CD8-positive, alpha-beta T cell (primary cell): ENCODE measurements at regions of chr7 and their contacts with region 1.

Region 1: DNA sequence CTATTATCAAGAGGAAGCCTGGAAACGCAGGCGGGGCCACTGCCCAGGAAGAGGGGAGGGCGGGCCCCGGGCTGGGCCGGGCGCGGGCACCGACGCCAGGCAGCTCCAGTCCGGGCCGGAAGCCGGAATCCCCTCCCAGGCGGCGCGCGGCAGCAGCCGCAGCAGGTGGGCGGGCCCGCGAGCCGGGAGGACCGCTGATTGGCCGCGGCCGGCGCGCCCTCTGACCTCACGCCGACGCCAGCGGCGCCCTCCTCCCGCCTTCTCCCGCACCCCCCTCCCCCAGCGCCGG is 438 bp downstream of the BCL7B start:
- DNase-seq: peak; percentile 79 to 96 (median 90)
- ATAC-seq: peak; percentile 91
- H3K4me3 ChIP-seq: peak overlapping the region; percentile 83 to 84
- H3K4me3 Mint-ChIP-seq: peak overlapping the region; percentile 95
- H3K27ac ChIP-seq: peak overlapping the region; percentile 98 to 99
- H3K27ac Mint-ChIP-seq: peak overlapping the region; percentile 99
- H3K4me1 ChIP-seq: peaks cover 23% of the 10 kb centered on the region
- H3K4me1 Mint-ChIP-seq: peaks cover 36% of the 10 kb centered on the region
- H3K27me3 ChIP-seq: no peaks in the 10 kb centered on the region
- H3K27me3 Mint-ChIP-seq: no peaks in the 10 kb centered on the region
- CTCF ChIP-seq: no peak

Region 2: DNA sequence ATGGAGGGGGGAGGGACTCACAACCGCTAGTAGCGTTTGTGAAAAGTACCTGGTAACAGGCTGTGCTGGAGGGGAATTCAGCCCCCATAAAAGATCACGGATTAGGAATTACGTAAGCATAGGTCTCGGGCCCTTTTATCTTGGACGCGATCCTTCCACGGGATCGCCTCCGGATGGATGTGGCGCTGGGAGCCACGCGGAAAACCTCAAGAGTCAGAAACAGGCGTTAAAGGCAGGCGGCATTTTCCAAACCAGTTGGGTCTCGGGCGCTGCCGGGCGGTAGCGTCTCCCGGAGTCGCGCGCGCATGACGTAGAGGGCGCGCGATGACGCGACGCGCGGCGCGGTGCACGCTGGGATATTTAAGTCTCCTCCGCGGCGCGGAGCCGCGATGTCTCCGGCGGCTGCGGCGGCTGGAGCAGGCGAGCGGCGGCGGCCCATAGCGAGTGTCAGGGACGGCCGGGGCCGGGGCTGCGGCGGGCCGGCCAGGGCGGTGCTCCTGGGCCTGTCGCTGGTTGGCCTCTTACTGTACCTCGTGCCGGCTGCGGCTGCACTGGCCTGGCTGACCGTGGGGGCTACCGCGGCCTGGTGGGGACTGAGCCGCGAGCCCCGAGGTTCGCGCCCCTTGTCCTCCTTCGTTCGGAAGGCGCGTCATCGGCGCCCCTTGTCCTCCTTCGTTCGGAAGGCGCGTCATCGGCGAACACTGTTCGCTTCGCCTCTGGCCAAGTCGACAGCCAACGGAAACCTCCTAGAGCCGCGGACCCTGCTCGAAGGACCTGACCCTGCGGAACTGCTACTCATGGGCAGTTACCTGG is 632.1 kb before region 1 on chr7 and contains the start of gene POM121:
- CTCF ChIA-PET with region 1: no interaction called
- POLR2A ChIA-PET with region 1: no interaction called
- intact Hi-C with region 1: loop called in 1 of 2 experiments (anchors 1 kb)
- DNase-seq: peak; percentile 65 to 94 (median 82)
- ATAC-seq: peak; percentile 92
- H3K4me3 ChIP-seq: peak within 1 kb of the TSS; percentile 78 to 88
- H3K4me3 Mint-ChIP-seq: peak within 1 kb of the TSS; percentile 99
- H3K27ac ChIP-seq: peak within 1 kb of the TSS; percentile 92 to 94
- H3K27ac Mint-ChIP-seq: peak within 1 kb of the TSS; percentile 100
- H3K4me1 ChIP-seq: peaks cover 19% of the 10 kb centered on the region
- H3K4me1 Mint-ChIP-seq: peaks cover 41% of the 10 kb centered on the region
- H3K27me3 ChIP-seq: no peaks in the 10 kb centered on the region
- H3K27me3 Mint-ChIP-seq: no peaks in the 10 kb centered on the region
- CTCF ChIP-seq: no peak
- total RNA-seq, gene POM121: 79.4 to 83.6 TPM

Region 3: DNA sequence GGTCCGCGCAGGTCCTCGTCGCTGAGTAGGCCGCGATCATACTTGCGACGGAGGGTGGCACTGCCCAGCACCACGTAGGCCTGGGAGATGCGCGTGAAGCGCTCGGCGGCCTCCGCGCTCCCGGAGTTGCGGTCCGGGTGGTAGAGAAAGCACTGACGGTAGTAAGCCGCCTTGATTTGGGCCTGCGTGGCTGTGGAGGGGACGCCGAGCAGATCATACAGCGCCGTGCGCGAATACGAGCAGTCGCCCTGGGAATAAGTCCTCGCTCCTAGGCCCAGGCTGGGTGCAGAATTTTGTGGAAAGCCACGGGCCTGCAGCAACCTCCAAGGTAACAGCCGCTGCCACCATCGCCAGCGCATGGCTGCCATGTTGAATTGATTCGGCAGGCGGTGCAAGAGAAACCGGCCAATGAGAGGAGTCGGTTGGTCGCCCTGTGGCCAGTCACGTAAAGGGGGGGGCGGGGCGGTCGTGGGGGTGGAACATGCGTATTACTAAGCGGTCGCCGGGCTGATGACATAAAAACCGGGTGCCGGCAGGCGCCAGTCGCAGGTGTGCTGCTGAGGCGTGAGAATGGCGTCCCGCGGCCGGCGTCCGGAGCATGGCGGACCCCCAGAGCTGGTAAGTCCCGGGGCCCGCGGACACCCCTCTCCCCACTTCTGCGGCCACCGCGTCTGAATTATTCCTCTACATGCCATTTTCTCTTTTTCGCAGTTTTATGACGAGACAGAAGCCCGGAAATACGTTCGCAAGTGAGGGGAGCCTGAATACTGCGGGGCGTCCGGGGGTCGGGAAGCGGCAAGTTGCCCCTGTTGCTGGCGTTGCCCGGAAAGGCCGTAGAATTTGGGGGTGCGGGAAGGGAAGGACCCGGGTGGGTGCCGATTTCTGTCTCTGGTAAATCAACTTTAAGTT is 126.3 kb after region 1 on chr7 and contains the starts of genes BUD23 and DNAJC30:
- CTCF ChIA-PET with region 1: no interaction called
- POLR2A ChIA-PET with region 1: no interaction called
- intact Hi-C with region 1: loop called (anchors 1 to 5 kb)
- DNase-seq: peak; percentile 95 to 97 (median 97)
- ATAC-seq: peak; percentile 98
- H3K4me3 ChIP-seq: peak within 1 kb of the TSS; percentile 80 to 96
- H3K4me3 Mint-ChIP-seq: peak within 1 kb of the TSS; percentile 93
- H3K27ac ChIP-seq: peak within 1 kb of the TSS; percentile 81 to 90
- H3K27ac Mint-ChIP-seq: peak within 1 kb of the TSS; percentile 97
- H3K4me1 ChIP-seq: peaks cover 29% of the 10 kb centered on the region
- H3K4me1 Mint-ChIP-seq: peaks cover 39% of the 10 kb centered on the region
- H3K27me3 ChIP-seq: no peaks in the 10 kb centered on the region
- H3K27me3 Mint-ChIP-seq: no peaks in the 10 kb centered on the region
- CTCF ChIP-seq: no peak
- total RNA-seq, gene BUD23: 123 to 129 TPM
- total RNA-seq, gene DNAJC30: 13.5 to 14.4 TPM

Region 4: GRCh38 chr7:73718905-73719805 is 162.1 kb after region 1 on chr7 and contains the start of gene STX1A:
- CTCF ChIA-PET with region 1: no interaction called
- POLR2A ChIA-PET with region 1: no interaction called
- intact Hi-C with region 1: loop called in 1 of 2 experiments (anchors 2 kb)
- DNase-seq: peak; percentile 28 to 86 (median 69)
- ATAC-seq: peak; percentile 76
- H3K4me3 ChIP-seq: peak within 1 kb of the TSS; percentile 73 to 79
- H3K4me3 Mint-ChIP-seq: peak within 1 kb of the TSS; percentile 87
- H3K27ac ChIP-seq: no peak within 1 kb of the TSS
- H3K27ac Mint-ChIP-seq: no peak within 1 kb of the TSS
- H3K4me1 ChIP-seq: peaks cover 28% of the 10 kb centered on the region
- H3K4me1 Mint-ChIP-seq: peaks cover 22% of the 10 kb centered on the region
- H3K27me3 ChIP-seq: no peaks in the 10 kb centered on the region
- H3K27me3 Mint-ChIP-seq: no peaks in the 10 kb centered on the region
- CTCF ChIP-seq: no peak
- total RNA-seq, gene STX1A: 18.2 to 20.8 TPM

Region 5: GRCh38 chr7:73839757-73840714 is 283.0 kb after region 1 on chr7:
- CTCF ChIA-PET with region 1: no interaction called
- POLR2A ChIA-PET with region 1: no interaction called
- intact Hi-C with region 1: no loop called
- DNase-seq: no peak
- ATAC-seq: no peak
- H3K4me3 ChIP-seq: no peak overlapping the region
- H3K4me3 Mint-ChIP-seq: no peak overlapping the region
- H3K27ac ChIP-seq: no peak overlapping the region
- H3K27ac Mint-ChIP-seq: no peak overlapping the region
- H3K4me1 ChIP-seq: peaks cover 5% of the 10 kb centered on the region
- H3K4me1 Mint-ChIP-seq: peaks cover 13% of the 10 kb centered on the region
- H3K27me3 ChIP-seq: no peaks in the 10 kb centered on the region
- H3K27me3 Mint-ChIP-seq: no peaks in the 10 kb centered on the region
- CTCF ChIP-seq: no peak

Region 6: GRCh38 chr7:74656837-74657691 is 1100.0 kb after region 1 on chr7:
- CTCF ChIA-PET with region 1: no interaction called
- POLR2A ChIA-PET with region 1: no interaction called
- intact Hi-C with region 1: loop called in 1 of 2 experiments (anchors 5 kb)
- DNase-seq: peak; percentile 95 to 99 (median 98)
- ATAC-seq: peak; percentile 74
- H3K4me3 ChIP-seq: peak overlapping the region; percentile 77 to 88
- H3K4me3 Mint-ChIP-seq: peak overlapping the region; percentile 88
- H3K27ac ChIP-seq: peak overlapping the region; percentile 54 to 69
- H3K27ac Mint-ChIP-seq: peak overlapping the region; percentile 85
- H3K4me1 ChIP-seq: peaks cover 33% of the 10 kb centered on the region
- H3K4me1 Mint-ChIP-seq: peaks cover 45% of the 10 kb centered on the region
- H3K27me3 ChIP-seq: no peaks in the 10 kb centered on the region
- H3K27me3 Mint-ChIP-seq: no peaks in the 10 kb centered on the region
- CTCF ChIP-seq: no peak